ENCODE measurements at regions of chr2 and their contacts with region 1.

Region 1: DNA sequence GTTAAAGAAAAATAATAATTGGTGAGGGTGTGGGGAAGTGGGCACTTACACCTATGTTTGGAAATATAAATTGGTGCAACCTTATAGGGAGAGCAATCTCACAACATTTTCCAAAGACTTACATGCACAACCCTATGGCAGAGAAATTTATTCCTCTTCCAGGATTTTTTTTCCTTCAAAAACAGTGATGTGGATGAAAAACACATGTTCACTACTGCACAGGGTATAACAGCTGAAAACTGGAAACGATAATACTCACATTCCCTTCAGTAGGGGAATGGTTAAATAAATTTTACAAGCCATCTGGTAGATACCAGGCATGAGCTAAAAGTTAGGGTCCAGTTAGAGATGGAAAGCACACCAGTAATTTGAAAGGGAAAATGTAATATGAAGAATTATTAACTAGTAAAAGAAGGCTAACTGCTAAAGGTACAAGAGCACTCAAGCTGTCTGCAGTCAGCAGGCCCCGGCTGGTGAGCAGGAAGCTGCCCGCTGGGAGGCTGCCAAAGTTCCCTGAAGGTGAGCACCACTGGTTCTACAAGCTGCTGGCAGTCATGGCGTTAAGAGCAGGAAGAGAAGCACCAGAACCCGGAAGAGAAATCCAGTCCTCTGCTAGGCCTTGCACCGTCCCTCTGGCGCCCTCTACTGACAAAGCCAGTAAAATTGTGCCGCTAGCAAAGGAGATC is 28.4 kb upstream of the CASP8 start:
- DNase-seq: peak; percentile 87

Region 2: GRCh38 chr2:201057087-201057521 is 174.8 kb before region 1 on chr2:
- CTCF ChIA-PET with region 1: no interaction called
- POLR2A ChIA-PET with region 1: no interaction called
- DNase-seq: no peak

Region 3: GRCh38 chr2:201182650-201183364 is 49.1 kb before region 1 on chr2 and contains the start of gene CASP10:
- CTCF ChIA-PET with region 1: interaction called, 30 read pairs
- POLR2A ChIA-PET with region 1: interaction called, 21 read pairs
- DNase-seq: peak; percentile 65

Region 4: GRCh38 chr2:201220102-201220570 is 11.8 kb before region 1 on chr2:
- CTCF ChIA-PET with region 1: interaction called, 18 read pairs
- POLR2A ChIA-PET with region 1: no interaction called
- DNase-seq: no peak

Region 5: DNA sequence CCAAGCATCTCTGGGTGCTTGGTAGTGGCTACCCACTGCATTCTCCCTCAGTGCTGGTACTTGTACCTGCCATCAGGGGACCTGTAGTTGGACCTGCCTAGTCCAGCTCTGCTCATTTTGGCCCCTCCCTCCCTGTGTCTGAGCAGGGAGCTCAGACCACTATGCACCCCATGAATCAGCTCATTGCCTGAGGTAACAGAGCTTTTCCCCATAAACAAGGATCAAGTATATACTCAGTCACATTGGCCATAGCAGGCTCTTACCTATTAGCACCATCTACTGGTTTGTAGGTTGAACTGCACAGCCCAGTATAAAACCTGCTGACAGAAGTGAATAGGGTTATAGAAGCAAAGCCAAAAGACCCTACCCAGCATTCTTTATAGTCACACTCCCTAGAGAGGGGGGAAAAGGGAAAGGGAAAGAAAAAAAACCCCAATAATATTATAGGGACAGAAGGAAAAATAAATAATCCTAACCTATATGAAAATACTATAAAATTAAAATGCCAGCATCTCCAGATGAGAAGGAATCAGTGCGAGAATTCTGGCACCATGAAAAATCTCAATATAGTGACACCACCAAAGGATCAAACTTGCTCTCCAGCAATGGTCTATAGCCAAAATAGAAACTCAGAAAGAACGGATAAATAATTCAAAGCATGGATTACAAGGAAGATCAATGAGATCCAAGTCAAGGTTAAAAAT is 132.1 kb after region 1 on chr2:
- CTCF ChIA-PET with region 1: interaction called, 12 read pairs
- POLR2A ChIA-PET with region 1: no interaction called
- DNase-seq: peak; percentile 28

Measured in HEK293T (cell line).